CD8-positive, alpha-beta T cell (primary cell): ENCODE measurements at regions of chr1 and their contacts with region 1.

Region 1: DNA sequence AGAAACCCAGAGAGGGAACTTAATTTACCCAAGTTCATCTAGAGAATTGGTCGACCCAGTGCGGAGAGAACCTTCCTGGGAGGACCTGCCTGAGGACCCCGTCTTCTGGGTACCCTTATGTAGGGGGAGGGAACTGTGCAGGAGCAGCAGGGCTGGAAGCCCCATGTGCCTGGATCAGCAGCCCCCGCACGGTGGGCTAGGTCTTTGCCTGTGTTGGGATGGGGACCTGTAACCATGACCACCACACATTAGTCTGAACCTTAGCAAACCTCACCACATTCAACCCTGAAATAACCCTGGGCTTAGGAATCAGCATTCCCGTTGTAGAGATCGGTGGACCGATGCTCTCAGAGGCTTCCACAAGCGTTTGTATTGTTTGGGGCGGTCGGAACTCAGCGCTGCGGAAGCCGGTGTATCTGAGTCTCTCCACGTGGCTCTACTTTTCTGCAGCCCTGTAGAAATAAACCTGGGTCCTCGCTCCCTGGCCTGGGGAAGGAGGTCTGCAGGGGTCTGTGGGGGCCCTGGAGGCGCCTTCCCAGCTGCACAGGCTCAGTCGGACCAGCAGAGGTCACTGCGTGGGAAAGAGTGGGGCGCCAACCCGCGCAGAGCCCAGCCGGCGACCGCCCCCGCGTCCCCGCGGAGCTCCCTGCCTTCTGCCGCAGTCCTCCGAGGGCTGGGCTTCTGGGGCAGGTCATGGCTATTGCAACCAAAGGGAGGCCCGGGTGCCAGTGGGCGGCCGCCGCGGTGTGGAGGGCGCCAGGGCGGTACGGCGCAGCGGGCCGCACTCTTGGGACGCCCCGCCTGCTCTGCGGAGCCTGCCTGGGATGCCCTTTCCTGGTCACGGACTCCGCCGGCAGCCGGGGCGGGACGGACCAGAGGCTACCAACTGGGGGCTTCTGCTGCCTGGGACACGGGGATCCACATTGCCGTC is 36.2 kb upstream of the KCNA10 start:
- DNase-seq: peak; percentile 24 to 75 (median 57)
- ATAC-seq: peak; percentile 97
- H3K4me3 ChIP-seq: peak overlapping the region in 1 of 2 experiments; percentile 23
- H3K4me3 Mint-ChIP-seq: peak overlapping the region; percentile 27
- H3K27ac ChIP-seq: no peak overlapping the region
- H3K27ac Mint-ChIP-seq: no peak overlapping the region
- H3K4me1 ChIP-seq: peaks cover 5% of the 10 kb centered on the region
- H3K4me1 Mint-ChIP-seq: peaks cover 4% of the 10 kb centered on the region
- H3K27me3 ChIP-seq: no peaks in the 10 kb centered on the region
- H3K27me3 Mint-ChIP-seq: peaks cover 44% of the 10 kb centered on the region
- CTCF ChIP-seq: peak; percentile 58

Region 2: GRCh38 chr1:110544753-110545152 is 10.4 kb before region 1 on chr1:
- CTCF ChIA-PET with region 1: interaction called, 11 read pairs
- POLR2A ChIA-PET with region 1: no interaction called
- intact Hi-C with region 1: no loop called
- DNase-seq: no peak
- ATAC-seq: no peak
- H3K4me3 ChIP-seq: no peak overlapping the region
- H3K4me3 Mint-ChIP-seq: no peak overlapping the region
- H3K27ac ChIP-seq: no peak overlapping the region
- H3K27ac Mint-ChIP-seq: no peak overlapping the region
- H3K4me1 ChIP-seq: no peaks in the 10 kb centered on the region
- H3K4me1 Mint-ChIP-seq: no peaks in the 10 kb centered on the region
- H3K27me3 ChIP-seq: no peaks in the 10 kb centered on the region
- H3K27me3 Mint-ChIP-seq: peaks cover 15% of the 10 kb centered on the region
- CTCF ChIP-seq: no peak

Region 3: GRCh38 chr1:110565565-110565964 is 10.4 kb after region 1 on chr1:
- CTCF ChIA-PET with region 1: interaction called, 12 read pairs
- POLR2A ChIA-PET with region 1: no interaction called
- intact Hi-C with region 1: no loop called
- DNase-seq: no peak
- ATAC-seq: no peak
- H3K4me3 ChIP-seq: no peak overlapping the region
- H3K4me3 Mint-ChIP-seq: no peak overlapping the region
- H3K27ac ChIP-seq: no peak overlapping the region
- H3K27ac Mint-ChIP-seq: no peak overlapping the region
- H3K4me1 ChIP-seq: no peaks in the 10 kb centered on the region
- H3K4me1 Mint-ChIP-seq: no peaks in the 10 kb centered on the region
- H3K27me3 ChIP-seq: no peaks in the 10 kb centered on the region
- H3K27me3 Mint-ChIP-seq: peaks cover 33% of the 10 kb centered on the region
- CTCF ChIP-seq: no peak

Region 4: DNA sequence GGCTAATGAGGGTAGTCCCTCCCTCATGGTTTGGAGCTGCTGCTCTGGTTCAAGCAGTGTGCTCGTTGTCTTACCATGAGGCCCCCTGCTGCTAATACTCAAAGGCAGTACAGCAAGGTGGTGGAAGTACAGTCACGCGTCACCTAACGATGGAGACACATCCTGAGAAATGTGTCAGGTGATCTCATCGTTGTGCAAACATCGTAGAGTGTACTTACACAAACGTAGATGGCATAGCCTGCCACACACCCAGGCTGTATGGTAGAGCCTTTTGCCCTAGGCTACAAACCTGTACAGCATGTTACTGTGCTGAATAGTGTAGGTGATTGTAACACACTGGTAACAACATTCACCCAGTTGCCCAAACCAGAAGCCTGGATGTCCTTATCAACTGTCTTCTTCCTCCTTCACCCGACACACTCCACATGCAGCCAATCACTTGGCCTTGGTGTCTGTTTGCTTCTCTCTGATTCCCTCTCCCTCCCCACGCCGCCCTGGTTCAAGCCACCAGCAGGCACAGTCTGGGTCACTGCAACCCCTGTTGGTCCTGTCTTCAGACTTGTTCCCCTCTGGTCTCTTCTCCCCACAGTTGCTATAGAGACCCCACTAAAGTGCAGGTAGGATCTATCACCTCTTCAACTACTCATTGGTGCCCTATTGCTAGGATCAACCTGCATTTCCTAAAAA is 57.1 kb after region 1 on chr1:
- CTCF ChIA-PET with region 1: interaction called, 34 read pairs
- POLR2A ChIA-PET with region 1: interaction called, 3 read pairs
- intact Hi-C with region 1: loop called (anchors 1 kb)
- DNase-seq: peak in 1 of 9 experiments; percentile 23
- ATAC-seq: no peak
- H3K4me3 ChIP-seq: no peak overlapping the region
- H3K4me3 Mint-ChIP-seq: no peak overlapping the region
- H3K27ac ChIP-seq: no peak overlapping the region
- H3K27ac Mint-ChIP-seq: no peak overlapping the region
- H3K4me1 ChIP-seq: peaks cover 15% of the 10 kb centered on the region
- H3K4me1 Mint-ChIP-seq: peaks cover 25% of the 10 kb centered on the region
- H3K27me3 ChIP-seq: peaks cover 9 to 12% of the 10 kb centered on the region in 2 experiments
- H3K27me3 Mint-ChIP-seq: peaks cover 17% of the 10 kb centered on the region
- CTCF ChIP-seq: no peak

Region 5: DNA sequence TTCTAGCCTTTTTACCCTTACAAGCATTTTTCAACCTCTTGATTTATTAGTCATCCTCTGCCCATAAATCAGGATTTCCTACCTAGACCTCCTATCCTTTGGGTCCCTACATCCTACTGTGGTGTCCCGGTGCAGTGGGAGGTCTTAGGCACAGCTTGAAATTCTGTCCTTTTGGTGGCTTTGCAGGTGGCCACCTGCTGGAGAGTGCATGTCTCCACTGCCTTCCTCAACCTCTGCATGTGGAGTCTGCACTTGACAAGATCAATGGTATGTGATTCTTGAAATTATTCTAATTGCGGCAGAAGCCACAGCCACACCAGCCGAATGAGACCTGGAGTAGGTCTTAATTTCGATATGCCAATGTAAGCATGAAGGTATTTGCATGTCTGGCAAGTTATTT is 131.1 kb after region 1 on chr1:
- CTCF ChIA-PET with region 1: interaction called, 3 read pairs
- POLR2A ChIA-PET with region 1: no interaction called
- intact Hi-C with region 1: loop called in 1 of 2 experiments (anchors 5 kb)
- DNase-seq: peak in 7 of 9 experiments; percentile 10 to 65 (median 36)
- ATAC-seq: peak; percentile 84
- H3K4me3 ChIP-seq: no peak overlapping the region
- H3K4me3 Mint-ChIP-seq: no peak overlapping the region
- H3K27ac ChIP-seq: no peak overlapping the region
- H3K27ac Mint-ChIP-seq: no peak overlapping the region
- H3K4me1 ChIP-seq: no peaks in the 10 kb centered on the region
- H3K4me1 Mint-ChIP-seq: peaks cover 4% of the 10 kb centered on the region
- H3K27me3 ChIP-seq: no peaks in the 10 kb centered on the region
- H3K27me3 Mint-ChIP-seq: no peaks in the 10 kb centered on the region
- CTCF ChIP-seq: peak; percentile 34

Region 6: DNA sequence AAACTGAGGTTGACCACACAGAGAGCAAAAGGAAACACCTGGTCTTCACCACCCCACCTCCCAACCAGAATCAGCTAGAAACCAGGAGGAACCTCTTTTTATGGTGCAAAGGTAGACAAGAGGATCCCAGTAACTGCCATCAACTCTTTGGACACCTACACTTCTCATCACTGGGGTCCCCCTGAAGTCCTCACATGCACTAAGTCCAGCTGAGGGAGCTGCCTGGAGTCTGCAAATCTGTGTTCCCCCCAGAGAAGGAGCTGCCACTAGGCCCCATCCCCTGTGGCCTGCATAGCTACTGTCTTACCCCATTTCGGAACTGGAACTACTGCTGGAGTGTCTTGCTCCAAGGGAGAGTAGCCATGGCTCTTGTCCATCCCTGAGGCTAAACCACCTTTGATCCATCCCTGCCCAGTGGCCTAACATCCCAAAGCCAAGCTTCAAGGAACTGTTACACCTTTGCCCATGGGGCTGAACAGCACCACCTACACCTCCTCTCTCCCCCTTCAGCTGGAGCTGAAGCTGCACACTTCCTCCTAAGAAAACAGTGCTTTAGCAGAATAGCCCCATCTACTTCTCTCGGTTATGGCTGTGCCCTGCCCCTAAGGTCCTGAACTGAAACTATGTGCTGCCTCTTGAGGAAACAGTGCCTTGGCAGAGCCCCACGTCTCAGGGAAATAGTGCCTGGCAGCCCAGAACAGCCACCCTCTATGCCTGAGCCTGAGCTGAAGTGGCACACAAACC is 232.4 kb after region 1 on chr1:
- CTCF ChIA-PET with region 1: interaction called, 56 read pairs
- POLR2A ChIA-PET with region 1: no interaction called
- intact Hi-C with region 1: loop called in 1 of 2 experiments (anchors 1 kb)
- DNase-seq: peak in 8 of 9 experiments; percentile 16 to 79 (median 50)
- ATAC-seq: peak; percentile 69
- H3K4me3 ChIP-seq: peak overlapping the region; percentile 23 to 25
- H3K4me3 Mint-ChIP-seq: peak overlapping the region; percentile 71
- H3K27ac ChIP-seq: peak overlapping the region; percentile 22 to 64
- H3K27ac Mint-ChIP-seq: peak overlapping the region; percentile 82
- H3K4me1 ChIP-seq: peaks cover 58% of the 10 kb centered on the region
- H3K4me1 Mint-ChIP-seq: peaks cover 68% of the 10 kb centered on the region
- H3K27me3 ChIP-seq: no peaks in the 10 kb centered on the region
- H3K27me3 Mint-ChIP-seq: no peaks in the 10 kb centered on the region
- CTCF ChIP-seq: no peak